HAP-1 (cell line): ENCODE measurements at regions of chr16 and their contacts with region 1.

Region 1: DNA sequence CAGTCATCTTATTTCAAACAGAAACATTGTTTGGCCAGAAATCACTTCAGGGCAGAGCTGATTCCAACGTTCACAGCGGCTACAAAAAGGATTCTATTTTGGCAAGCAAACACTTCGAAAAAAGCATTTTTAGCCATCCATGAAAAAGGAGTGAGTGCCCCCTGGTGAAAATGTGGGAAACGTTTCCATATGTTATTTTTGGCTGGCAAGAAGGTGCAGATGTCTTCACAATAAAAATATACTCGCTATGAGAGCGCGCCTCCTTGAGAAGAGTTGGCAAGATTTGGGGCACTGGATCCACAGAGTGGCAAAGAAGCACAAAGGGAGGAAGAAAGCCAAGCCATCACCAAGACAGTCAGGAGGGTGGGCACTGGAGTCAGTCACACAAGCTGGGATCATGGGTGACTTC is 191.1 kb downstream of the CHD9NB start:
- DNase-seq: peak; percentile 63 to 68
- H3K4me3 ChIP-seq: no peak overlapping the region
- H3K4me1 ChIP-seq: peaks cover 4% of the 10 kb centered on the region
- H3K27me3 ChIP-seq: no peaks in the 10 kb centered on the region

Region 2: GRCh38 chr16:52068447-52069074 is 793.1 kb before region 1 on chr16:
- in situ Hi-C with region 1: loop called (anchors 25 kb)
- DNase-seq: peak; percentile 42 to 50
- H3K4me3 ChIP-seq: no peak overlapping the region
- H3K4me1 ChIP-seq: 0 out of 2 replicates have a peak, but pooled peaks cover 2% of the 10 kb centered on the region
- H3K27me3 ChIP-seq: no peaks in the 10 kb centered on the region

Region 3: DNA sequence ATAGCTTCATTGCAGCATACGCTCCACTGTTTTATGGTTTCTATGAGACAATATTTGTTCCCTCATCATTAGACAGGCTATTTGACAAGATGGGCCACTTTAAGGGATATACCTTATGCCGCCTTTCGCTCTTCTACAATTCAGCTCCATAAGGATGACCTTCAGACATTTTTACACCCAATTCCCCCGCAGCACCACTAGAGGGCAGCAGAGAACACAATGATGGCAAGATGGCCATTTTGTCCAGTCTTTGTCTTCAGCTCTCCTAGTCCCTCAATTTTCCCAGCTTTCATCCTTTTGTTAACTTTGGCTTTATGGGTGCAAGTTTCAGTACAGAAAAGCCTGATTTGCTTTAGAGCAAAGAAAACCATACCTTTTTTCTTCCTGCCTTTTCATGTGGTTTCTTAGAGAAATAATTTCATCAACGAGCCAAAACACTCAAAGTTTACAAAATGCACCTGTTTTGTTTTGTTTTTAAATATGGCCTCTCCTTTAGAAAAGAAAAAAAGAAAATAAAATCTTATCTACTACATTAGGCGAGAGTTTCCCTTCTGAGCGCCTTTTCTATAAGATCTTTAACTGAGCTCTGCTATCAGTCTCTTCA is 670.0 kb before region 1 on chr16:
- in situ Hi-C with region 1: loop called (anchors 5 kb)
- DNase-seq: peak; percentile 83 to 87
- H3K4me3 ChIP-seq: no peak overlapping the region
- H3K4me1 ChIP-seq: peaks cover 3% of the 10 kb centered on the region
- H3K27me3 ChIP-seq: no peaks in the 10 kb centered on the region

Region 4: DNA sequence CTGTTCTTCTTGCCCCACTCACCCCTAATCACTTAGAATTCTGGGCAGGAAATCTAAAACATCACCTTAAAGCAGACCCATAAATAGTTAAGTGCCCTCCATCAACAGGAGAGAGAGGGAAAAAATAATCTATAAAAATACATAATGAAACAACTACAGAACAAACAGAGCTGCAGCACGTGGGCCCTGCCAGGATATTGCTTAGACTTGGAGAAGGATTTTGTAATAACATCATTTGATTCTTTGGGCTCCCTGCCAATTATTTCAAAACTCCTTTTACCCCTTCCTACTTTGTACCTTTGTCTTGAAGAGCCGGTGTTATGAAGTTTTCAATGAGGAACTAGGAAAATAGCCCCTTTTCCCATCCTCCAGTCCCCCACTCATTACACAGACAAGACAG is 184.1 kb before region 1 on chr16:
- in situ Hi-C with region 1: no loop called
- DNase-seq: no peak
- H3K4me3 ChIP-seq: no peak overlapping the region
- H3K4me1 ChIP-seq: no peaks in the 10 kb centered on the region
- H3K27me3 ChIP-seq: no peaks in the 10 kb centered on the region